Vagina (tissue), 2 donors: ENCODE measurements at regions of chr3 and their contacts with region 1.

Region 1: GRCh38 chr3:83843716-83844115 is 1115.1 kb upstream of the CADM2 start:
- DNase-seq: no peak
- H3K4me3 ChIP-seq: no peak overlapping the region
- H3K27ac ChIP-seq: no peak overlapping the region
- H3K4me1 ChIP-seq: no peaks in the 10 kb centered on the region
- H3K27me3 ChIP-seq: no peaks in the 10 kb centered on the region
- CTCF ChIP-seq: no peak
- POLR2A ChIP-seq: no peak

Region 2: GRCh38 chr3:82938821-82939328 is 904.8 kb before region 1 on chr3:
- intact Hi-C with region 1: loop called (anchors 10 kb)
- DNase-seq: no peak
- H3K4me3 ChIP-seq: no peak overlapping the region
- H3K27ac ChIP-seq: no peak overlapping the region
- H3K4me1 ChIP-seq: no peaks in the 10 kb centered on the region
- H3K27me3 ChIP-seq: no peaks in the 10 kb centered on the region
- CTCF ChIP-seq: no peak
- POLR2A ChIP-seq: no peak

Region 3: GRCh38 chr3:83434880-83435587 is 408.7 kb before region 1 on chr3:
- intact Hi-C with region 1: no loop called
- DNase-seq: no peak
- H3K4me3 ChIP-seq: no peak overlapping the region
- H3K27ac ChIP-seq: no peak overlapping the region
- H3K4me1 ChIP-seq: no peaks in the 10 kb centered on the region
- H3K27me3 ChIP-seq: no peaks in the 10 kb centered on the region
- CTCF ChIP-seq: no peak
- POLR2A ChIP-seq: no peak

Region 4: GRCh38 chr3:83649692-83650091 is 194.0 kb before region 1 on chr3:
- intact Hi-C with region 1: no loop called
- DNase-seq: no peak
- H3K4me3 ChIP-seq: no peak overlapping the region
- H3K27ac ChIP-seq: no peak overlapping the region
- H3K4me1 ChIP-seq: no peaks in the 10 kb centered on the region
- H3K27me3 ChIP-seq: no peaks in the 10 kb centered on the region
- CTCF ChIP-seq: no peak
- POLR2A ChIP-seq: no peak

Region 5: DNA sequence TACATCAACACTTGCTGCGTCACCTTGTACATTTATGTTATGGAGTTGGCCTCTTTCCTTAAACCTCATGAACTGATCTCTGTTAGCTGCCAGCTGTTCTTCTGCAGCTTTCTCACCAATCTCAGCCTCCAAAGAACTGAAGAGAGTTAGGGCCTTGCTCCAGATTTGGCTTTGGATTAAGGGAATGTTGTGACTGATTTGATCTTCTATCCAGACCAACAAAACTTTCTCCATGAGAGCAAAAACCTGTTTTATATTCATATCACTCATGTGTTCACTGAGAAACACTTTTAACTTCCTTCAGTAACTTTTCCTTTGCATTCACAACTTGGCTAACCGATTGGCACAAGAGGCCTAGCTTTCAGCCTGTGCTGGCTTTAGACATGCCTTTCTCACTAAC is 40.9 kb before region 1 on chr3:
- intact Hi-C with region 1: no loop called
- DNase-seq: no peak
- H3K4me3 ChIP-seq: no peak overlapping the region
- H3K27ac ChIP-seq: no peak overlapping the region
- H3K4me1 ChIP-seq: no peaks in the 10 kb centered on the region
- H3K27me3 ChIP-seq: no peaks in the 10 kb centered on the region
- CTCF ChIP-seq: no peak
- POLR2A ChIP-seq: no peak

Region 6: DNA sequence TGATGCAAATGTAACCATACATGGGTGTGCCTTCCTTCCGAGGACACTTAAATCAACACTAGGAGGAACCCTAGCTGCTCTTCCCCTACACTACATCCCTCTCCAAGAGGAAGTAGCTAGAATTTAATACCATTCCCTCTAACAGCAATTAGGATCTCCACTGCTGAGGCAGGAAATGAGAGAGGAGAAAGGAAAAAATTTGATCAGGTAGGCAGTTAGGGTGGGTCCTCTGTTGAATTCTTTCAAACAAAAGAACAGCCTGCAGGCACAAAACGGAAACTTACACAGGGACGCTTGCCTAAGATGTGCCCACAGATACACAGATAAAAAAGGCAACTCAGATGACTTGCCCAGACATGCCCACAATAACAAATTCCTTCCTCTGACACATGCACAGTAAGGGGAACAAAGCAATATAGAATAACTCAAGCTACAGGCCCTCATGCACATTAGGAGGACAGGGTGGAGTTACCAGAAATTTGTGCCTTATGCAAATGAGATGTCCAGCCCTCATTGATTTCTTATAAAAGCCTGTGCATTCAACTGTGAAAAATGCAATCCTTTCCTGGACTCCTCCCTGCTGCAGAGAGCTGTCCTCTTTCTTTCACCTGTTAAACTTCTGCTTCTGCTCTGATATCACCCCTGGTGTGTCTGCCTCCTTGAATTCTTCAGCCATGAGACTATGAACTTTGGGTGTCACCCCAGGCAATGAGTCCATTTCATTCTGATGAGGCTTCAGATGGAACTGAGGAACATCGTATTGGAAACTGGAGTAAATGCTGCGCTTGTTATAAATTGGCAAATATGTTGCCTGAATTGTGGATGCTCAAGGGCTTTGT is 90.8 kb after region 1 on chr3:
- intact Hi-C with region 1: no loop called
- DNase-seq: no peak
- H3K4me3 ChIP-seq: no peak overlapping the region
- H3K27ac ChIP-seq: no peak overlapping the region
- H3K4me1 ChIP-seq: no peaks in the 10 kb centered on the region
- H3K27me3 ChIP-seq: no peaks in the 10 kb centered on the region
- CTCF ChIP-seq: no peak
- POLR2A ChIP-seq: no peak